Aorta (tissue), 5 donors: ENCODE measurements at regions of chr3 and their contacts with region 1.

Region 1: DNA sequence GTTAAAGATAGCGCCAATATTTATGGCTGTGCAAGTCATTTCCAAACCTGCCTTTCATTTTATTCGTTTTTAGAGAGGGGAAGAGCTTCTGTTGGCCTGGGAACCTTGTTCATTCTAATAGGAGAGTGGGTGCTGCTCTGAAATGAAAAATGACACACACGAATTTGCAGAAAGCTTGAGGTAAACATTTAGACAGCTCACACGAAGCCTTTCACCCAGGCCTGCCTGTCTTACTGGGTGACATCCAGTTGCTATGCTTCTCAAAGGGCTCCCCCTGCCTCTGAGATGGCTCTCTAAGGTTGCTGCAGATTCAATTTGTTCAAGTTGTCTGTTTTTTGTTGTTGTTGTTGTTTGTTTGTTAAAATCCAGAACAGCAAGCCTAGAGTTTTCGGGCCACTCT is 18.2 kb downstream of the PEX5L start:
- DNase-seq: no peak
- ATAC-seq: no peak
- H3K4me3 ChIP-seq: no peak overlapping the region
- H3K27ac ChIP-seq: no peak overlapping the region
- H3K4me1 ChIP-seq: no peaks in the 10 kb centered on the region
- H3K27me3 ChIP-seq: no peaks in the 10 kb centered on the region

Region 2: DNA sequence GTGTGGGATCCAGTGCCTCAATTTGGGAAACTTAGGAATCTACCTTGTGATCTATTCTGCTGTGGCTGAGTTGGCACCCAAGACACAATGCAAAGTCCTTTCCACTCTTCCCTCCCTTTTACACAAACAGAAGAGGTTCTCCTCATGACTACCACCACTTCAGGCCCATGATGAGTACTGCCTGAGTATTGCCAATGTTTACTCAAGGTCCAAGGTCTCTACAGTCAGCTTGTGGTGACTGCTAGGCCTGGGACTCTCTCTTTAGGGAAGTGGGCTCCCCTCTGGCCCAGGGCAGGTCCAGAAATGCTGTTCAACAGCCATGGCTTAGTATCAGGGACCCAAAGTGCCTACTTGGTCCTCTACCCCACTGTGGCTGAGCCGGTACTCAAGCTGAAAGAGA is 75.0 kb after region 1 on chr3:
- intact Hi-C with region 1: loop called in 1 of 2 experiments (anchors 2 kb)
- DNase-seq: no peak
- ATAC-seq: no peak
- H3K4me3 ChIP-seq: no peak overlapping the region
- H3K27ac ChIP-seq: no peak overlapping the region
- H3K4me1 ChIP-seq: no peaks in the 10 kb centered on the region
- H3K27me3 ChIP-seq: no peaks in the 10 kb centered on the region

Region 3: GRCh38 chr3:180131169-180131568 is 112.6 kb after region 1 on chr3:
- intact Hi-C with region 1: no loop called
- DNase-seq: no peak
- ATAC-seq: no peak
- H3K4me3 ChIP-seq: no peak overlapping the region
- H3K27ac ChIP-seq: no peak overlapping the region
- H3K4me1 ChIP-seq: no peaks in the 10 kb centered on the region
- H3K27me3 ChIP-seq: no peaks in the 10 kb centered on the region

Region 4: DNA sequence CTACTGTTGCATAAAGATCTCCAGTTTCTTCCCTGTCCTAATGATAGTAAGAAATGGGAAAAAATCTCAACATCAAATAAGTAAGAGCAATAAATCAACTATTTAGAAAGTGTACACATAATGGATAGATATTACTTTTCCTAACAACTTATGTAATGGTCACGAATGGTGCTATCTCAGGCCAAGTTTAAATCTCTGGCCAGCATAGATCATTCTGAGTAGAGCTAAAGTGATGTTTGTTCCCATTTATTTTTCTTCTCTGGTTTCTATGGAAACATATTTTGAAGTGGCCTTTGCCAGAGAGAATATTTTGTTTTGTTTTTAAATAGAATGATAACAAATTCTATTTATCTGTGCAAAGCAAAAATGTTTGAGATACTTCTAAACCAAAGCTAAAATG is 333.7 kb after region 1 on chr3:
- intact Hi-C with region 1: no loop called
- DNase-seq: no peak
- ATAC-seq: no peak
- H3K4me3 ChIP-seq: no peak overlapping the region
- H3K27ac ChIP-seq: no peak overlapping the region
- H3K4me1 ChIP-seq: no peaks in the 10 kb centered on the region
- H3K27me3 ChIP-seq: no peaks in the 10 kb centered on the region